Activated T-helper 1 cell treated with anti-CD3 and anti-CD28 coated beads, Interleukin-12 subunit alpha, Interleukin-12 subunit beta, Interleukin-2, Interleukin-4 antibody, amounts not matched to agents 30 ng/mL and 10 ng/mL and 1 ng/mL, durations not matched to agents 14 hours and 24 hours and 36 hours (primary cell): ENCODE measurements at regions of chr7 and their contacts with region 1.

Region 1: DNA sequence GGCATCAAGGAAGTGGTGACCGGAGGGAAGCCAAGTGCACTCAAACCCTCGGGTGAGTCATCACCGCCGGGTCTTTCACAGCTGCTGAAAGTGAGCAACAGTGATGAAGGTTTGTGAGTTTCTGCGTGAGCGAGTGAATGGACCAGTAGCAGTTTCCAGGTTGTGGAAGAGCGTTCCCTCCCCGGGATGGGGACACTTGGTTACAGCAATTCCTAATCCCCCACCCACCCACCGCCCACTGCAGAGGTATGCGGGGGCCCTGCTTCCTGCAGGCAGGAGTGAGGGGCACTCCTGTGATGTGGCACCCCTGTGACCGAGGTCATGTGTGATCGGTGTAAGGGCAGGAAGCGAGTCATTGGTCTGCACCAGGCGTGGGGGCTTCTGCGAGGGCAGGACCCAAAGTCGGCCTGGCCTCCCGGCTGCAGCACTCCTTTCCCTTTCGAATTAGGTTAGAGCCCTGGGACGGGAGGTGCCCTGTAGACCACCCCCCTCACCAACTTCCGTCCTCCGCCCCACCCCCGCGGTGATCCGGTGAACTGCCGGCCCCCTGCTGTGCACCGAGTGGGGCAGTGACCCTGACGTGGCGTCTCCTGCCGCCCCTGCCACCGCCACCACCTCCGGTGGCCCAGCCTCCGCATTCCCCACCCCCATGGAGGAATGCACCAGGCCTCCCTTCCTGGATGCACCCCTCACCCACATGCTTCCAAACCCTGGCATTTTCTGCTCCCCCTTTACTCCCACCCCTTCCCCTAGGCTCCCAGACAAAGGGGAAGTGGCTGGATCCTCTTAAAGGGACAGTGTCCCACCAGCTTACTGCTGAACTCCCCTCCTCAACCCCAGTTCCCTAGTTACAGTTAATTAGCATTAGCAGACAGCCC is 10.9 kb downstream of the LIMK1 start:
- DNase-seq: peak; percentile 64
- H3K4me3 Mint-ChIP-seq: peak overlapping the region; percentile 82
- H3K27ac Mint-ChIP-seq: peak overlapping the region; percentile 95
- H3K4me1 Mint-ChIP-seq: peaks cover 18% of the 10 kb centered on the region
- H3K27me3 Mint-ChIP-seq: no peaks in the 10 kb centered on the region

Region 2: DNA sequence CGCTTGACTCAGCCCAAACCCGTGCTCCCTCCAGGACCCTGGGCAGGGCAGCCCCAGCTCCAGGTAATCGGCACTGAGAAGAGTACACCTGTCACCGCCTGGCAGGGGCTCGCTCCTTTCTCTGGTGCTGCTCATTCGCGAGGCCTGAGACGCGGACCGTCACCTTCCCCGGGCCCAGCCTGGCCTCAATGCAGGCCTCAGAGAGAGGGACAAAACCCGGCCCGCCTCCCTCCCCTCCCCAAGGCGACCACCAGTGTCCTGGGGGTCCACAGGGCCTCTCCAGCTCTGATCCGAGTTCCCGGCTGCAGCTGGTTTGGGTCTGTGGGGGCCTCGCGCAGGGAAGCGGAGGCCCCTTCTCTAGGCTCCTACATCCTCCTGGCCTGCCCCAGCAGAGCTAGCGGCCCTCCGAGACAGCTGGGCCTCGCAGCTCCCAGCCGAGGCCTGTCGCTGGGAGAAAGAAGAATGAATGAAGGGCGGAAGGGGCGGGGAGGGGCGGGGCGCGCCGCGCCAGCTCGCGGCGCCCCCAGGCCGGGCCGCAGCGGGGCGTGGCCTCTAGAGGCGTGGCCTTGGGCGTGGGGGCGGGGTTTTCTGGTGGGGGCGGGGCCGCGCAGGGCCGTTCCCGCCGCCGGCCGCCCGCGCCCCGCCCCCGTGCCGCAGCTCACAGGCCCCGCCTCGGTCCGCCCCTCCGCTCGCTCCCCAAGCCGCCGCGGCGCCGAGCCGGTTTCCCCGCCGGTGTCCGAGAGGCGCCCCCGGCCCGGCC is 11.2 kb before region 1 on chr7 and contains the start of gene LIMK1:
- intact Hi-C with region 1: loop called (anchors 1 kb)
- DNase-seq: peak; percentile 78
- H3K4me3 Mint-ChIP-seq: peak within 1 kb of the TSS; percentile 88
- H3K27ac Mint-ChIP-seq: peak within 1 kb of the TSS; percentile 89
- H3K4me1 Mint-ChIP-seq: peaks cover 12% of the 10 kb centered on the region
- H3K27me3 Mint-ChIP-seq: peaks cover 2% of the 10 kb centered on the region
- total RNA-seq, gene LIMK1: 24.3 and 25.2 TPM in 2 replicates

Region 3: DNA sequence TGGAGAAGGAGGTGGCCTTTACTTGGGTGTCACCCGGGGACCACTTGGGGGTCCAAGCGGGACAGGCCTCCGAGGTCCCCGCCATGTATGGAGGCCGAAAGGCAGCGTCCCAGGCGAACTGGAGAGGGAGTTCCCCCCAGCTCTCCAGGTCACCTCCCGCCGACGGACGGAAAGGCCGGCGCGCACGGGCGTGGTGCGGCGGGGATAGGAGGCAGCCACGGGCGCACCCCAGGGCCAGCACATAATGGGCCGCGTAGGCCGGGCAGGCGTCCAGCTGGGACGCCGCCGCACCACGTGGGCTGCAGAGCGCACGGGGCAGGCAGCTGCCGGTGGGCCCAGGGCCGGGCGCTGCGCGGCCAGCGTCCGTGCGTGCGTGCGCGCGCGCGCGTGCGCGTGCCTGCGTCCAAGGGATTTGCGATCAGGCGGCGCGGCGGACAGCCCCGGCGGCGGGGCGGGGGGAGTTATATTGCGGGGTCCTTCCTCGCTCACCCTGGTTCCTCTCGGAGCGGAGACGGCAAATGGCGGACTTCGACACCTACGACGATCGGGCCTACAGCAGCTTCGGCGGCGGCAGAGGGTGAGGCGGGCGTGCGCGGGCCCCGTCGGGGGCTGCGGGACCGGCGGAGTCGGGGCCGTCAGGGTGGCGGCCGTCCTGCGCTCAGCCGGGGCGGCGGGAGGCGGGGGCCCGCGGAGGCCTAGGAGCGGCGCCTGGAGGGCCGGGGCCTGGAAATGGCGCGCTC is 79.6 kb after region 1 on chr7 and contains the start of gene EIF4H:
- intact Hi-C with region 1: loop called (anchors 1 kb)
- DNase-seq: peak; percentile 93
- H3K4me3 Mint-ChIP-seq: peak within 1 kb of the TSS; percentile 94
- H3K27ac Mint-ChIP-seq: peak within 1 kb of the TSS; percentile 90
- H3K4me1 Mint-ChIP-seq: peaks cover 45% of the 10 kb centered on the region
- H3K27me3 Mint-ChIP-seq: peaks cover 3% of the 10 kb centered on the region
- total RNA-seq, gene EIF4H: 343 and 355 TPM in 2 replicates

Region 4: DNA sequence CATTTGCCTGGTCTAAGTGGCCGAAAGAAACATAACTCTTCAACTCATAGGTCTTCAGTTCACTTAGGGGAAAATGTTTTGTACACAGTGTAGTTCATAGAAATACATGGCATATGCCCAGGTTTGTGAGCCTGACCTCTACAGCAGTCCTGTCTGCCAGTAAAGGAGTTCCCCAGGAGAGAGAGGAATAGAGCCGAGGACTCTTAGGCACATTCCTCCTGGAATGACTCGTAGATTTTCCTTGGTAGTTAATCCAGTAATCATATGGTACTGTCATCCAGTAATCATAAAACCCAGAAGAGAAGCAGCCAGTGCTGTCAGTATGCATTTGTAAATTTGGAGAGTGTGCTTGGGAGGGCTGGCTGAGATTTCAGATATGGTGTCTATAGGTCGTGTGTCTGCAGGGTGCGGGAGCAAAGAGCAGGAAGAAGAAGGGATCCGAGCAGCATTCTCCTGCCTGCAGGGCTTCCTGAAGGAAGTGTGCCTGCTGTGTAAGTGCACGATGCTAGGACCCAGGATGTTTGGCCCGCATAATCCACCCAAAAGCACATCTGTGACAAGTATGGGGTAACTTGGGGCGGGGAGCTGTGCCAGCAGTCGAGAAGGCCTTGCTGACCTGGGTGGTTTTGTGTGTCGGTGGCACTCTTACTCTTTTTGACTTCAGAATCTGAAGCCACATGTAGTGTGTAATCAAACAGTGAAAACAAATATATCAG is 93.6 kb after region 1 on chr7:
- intact Hi-C with region 1: no loop called
- DNase-seq: no peak
- H3K4me3 Mint-ChIP-seq: no peak overlapping the region
- H3K27ac Mint-ChIP-seq: no peak overlapping the region
- H3K4me1 Mint-ChIP-seq: peaks cover 43% of the 10 kb centered on the region
- H3K27me3 Mint-ChIP-seq: no peaks in the 10 kb centered on the region